PC-9 (cell line): ENCODE measurements at regions of chr7 and their contacts with region 1.

Region 1: GRCh38 chr7:84025332-84025927 is 169.2 kb downstream of the SEMA3A start:
- DNase-seq: peak; percentile 77 to 96
- H3K4me3 ChIP-seq: no peak overlapping the region
- H3K27ac ChIP-seq: peak overlapping the region; percentile 80
- H3K4me1 ChIP-seq: peaks cover 42% of the 10 kb centered on the region
- H3K27me3 ChIP-seq: no peaks in the 10 kb centered on the region
- CTCF ChIP-seq: no peak

Region 2: GRCh38 chr7:83976295-83976694 is 49.1 kb before region 1 on chr7:
- CTCF ChIA-PET with region 1: no interaction called
- POLR2A ChIA-PET with region 1: no interaction called
- intact Hi-C with region 1: loop called (anchors 1 kb)
- DNase-seq: peak in 1 of 2 experiments; percentile 35
- H3K4me3 ChIP-seq: no peak overlapping the region
- H3K27ac ChIP-seq: no peak overlapping the region
- H3K4me1 ChIP-seq: no peaks in the 10 kb centered on the region
- H3K27me3 ChIP-seq: no peaks in the 10 kb centered on the region
- CTCF ChIP-seq: peak; percentile 83

Region 3: GRCh38 chr7:84009051-84009450 is 16.4 kb before region 1 on chr7:
- CTCF ChIA-PET with region 1: no interaction called
- POLR2A ChIA-PET with region 1: no interaction called
- intact Hi-C with region 1: no loop called
- DNase-seq: no peak
- H3K4me3 ChIP-seq: no peak overlapping the region
- H3K27ac ChIP-seq: no peak overlapping the region
- H3K4me1 ChIP-seq: no peaks in the 10 kb centered on the region
- H3K27me3 ChIP-seq: no peaks in the 10 kb centered on the region
- CTCF ChIP-seq: no peak

Region 4: GRCh38 chr7:84042110-84042539 is 16.7 kb after region 1 on chr7:
- CTCF ChIA-PET with region 1: interaction called, 8 read pairs
- POLR2A ChIA-PET with region 1: no interaction called
- intact Hi-C with region 1: loop called (anchors 2 kb)
- DNase-seq: peak; percentile 25 to 76
- H3K4me3 ChIP-seq: no peak overlapping the region
- H3K27ac ChIP-seq: peak overlapping the region; percentile 72
- H3K4me1 ChIP-seq: peaks cover 19% of the 10 kb centered on the region
- H3K27me3 ChIP-seq: no peaks in the 10 kb centered on the region
- CTCF ChIP-seq: no peak

Region 5: GRCh38 chr7:84091321-84091720 is 65.9 kb after region 1 on chr7:
- CTCF ChIA-PET with region 1: no interaction called
- POLR2A ChIA-PET with region 1: no interaction called
- intact Hi-C with region 1: loop called (anchors 1 kb)
- DNase-seq: no peak
- H3K4me3 ChIP-seq: no peak overlapping the region
- H3K27ac ChIP-seq: no peak overlapping the region
- H3K4me1 ChIP-seq: 0 out of 2 replicates have a peak, but pooled peaks cover 7% of the 10 kb centered on the region
- H3K27me3 ChIP-seq: no peaks in the 10 kb centered on the region
- CTCF ChIP-seq: no peak

Region 6: DNA sequence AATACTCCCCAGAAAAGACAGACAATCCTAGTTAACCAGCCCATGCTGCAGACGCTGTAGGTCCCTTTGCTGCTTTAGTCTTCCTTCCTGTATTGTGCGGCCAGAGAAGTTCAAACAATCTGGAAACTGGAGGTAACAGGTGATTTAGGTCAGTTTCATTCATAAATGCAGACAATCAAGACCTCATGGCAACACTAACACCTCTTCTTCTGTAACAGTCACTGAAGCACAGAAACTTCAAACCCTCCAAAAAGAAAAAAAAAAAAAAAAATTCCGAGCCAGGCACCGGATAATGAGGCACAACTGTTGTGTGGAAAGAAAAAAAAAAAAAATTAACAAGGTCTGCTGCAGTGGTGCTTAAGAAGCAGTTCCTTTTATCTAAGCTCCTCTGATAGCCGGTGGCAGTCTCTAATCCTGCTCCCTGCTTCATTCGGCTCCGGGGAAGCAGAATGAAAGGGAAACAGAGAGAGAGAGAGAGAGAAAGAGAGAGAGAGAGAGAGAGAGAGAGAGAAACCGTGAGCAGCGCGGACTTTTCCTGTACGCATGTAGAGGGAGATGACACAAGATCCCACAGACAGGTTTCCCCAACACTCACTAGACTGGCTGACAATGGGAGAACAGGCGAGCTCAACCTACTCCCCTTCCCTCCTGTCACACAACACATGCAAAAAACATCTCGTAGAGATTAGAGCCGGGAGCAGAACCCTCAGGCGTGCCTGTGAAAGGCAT is 169.3 kb after region 1 on chr7 and contains the start of gene SEMA3A:
- CTCF ChIA-PET with region 1: no interaction called
- POLR2A ChIA-PET with region 1: interaction called, 10 read pairs
- intact Hi-C with region 1: no loop called
- DNase-seq: peak in 1 of 2 experiments; percentile 50
- H3K4me3 ChIP-seq: peak within 1 kb of the TSS; percentile 56
- H3K27ac ChIP-seq: no peak within 1 kb of the TSS
- H3K4me1 ChIP-seq: no peaks in the 10 kb centered on the region
- H3K27me3 ChIP-seq: no peaks in the 10 kb centered on the region
- CTCF ChIP-seq: peak; percentile 22; the same call in 1 of the 2 replicates
- total RNA-seq, gene SEMA3A: 6.1 and 6.3 TPM in 2 replicates

Region 7: GRCh38 chr7:84412161-84412969 is 386.9 kb after region 1 on chr7:
- CTCF ChIA-PET with region 1: no interaction called
- POLR2A ChIA-PET with region 1: no interaction called
- intact Hi-C with region 1: loop called (anchors 1 kb)
- DNase-seq: peak; percentile 44 to 95
- H3K4me3 ChIP-seq: no peak overlapping the region
- H3K27ac ChIP-seq: peak overlapping the region; percentile 93
- H3K4me1 ChIP-seq: peaks cover 28% of the 10 kb centered on the region
- H3K27me3 ChIP-seq: no peaks in the 10 kb centered on the region
- CTCF ChIP-seq: no peak

Region 8: GRCh38 chr7:84675633-84676034 is 650.2 kb after region 1 on chr7:
- CTCF ChIA-PET with region 1: no interaction called
- POLR2A ChIA-PET with region 1: no interaction called
- intact Hi-C with region 1: loop called (anchors 1 kb)
- DNase-seq: peak; percentile 83 to 91
- H3K4me3 ChIP-seq: no peak overlapping the region
- H3K27ac ChIP-seq: peak overlapping the region; percentile 32; the same call in 1 of the 2 replicates
- H3K4me1 ChIP-seq: peaks cover 9% of the 10 kb centered on the region; the same call in 1 of the 2 replicates
- H3K27me3 ChIP-seq: no peaks in the 10 kb centered on the region
- CTCF ChIP-seq: no peak